ENCODE measurements at regions of chr18 and their contacts with region 1.

Region 1: GRCh38 chr18:74551936-74552555 is 17.7 kb downstream of the CNDP1 start:
- DNase-seq: peak; percentile 83 to 92 (median 86)
- H3K4me3 ChIP-seq: no peak overlapping the region
- H3K27ac ChIP-seq: no peak overlapping the region
- H3K4me1 ChIP-seq: no peaks in the 10 kb centered on the region
- H3K27me3 ChIP-seq: peaks cover 0 to 5% (median 0%) of the 10 kb centered on the region in 5 experiments

Region 2: GRCh38 chr18:74196220-74197119 is 355.6 kb before region 1 on chr18:
- CTCF ChIA-PET with region 1: interaction called, 14 read pairs
- POLR2A ChIA-PET with region 1: no interaction called
- DNase-seq: peak; percentile 70 to 88 (median 85)
- H3K4me3 ChIP-seq: peak overlapping the region in 6 of 7 experiments; percentile 44 to 81 (median 56)
- H3K27ac ChIP-seq: peak overlapping the region in 1 of 2 experiments; percentile 45
- H3K4me1 ChIP-seq: peaks cover 0 to 3% (median 0%) of the 10 kb centered on the region in 4 experiments
- H3K27me3 ChIP-seq: peaks cover 0 to 7% (median 5%) of the 10 kb centered on the region in 5 experiments

Region 3: GRCh38 chr18:74353169-74353775 is 198.8 kb before region 1 on chr18:
- CTCF ChIA-PET with region 1: interaction called, 48 read pairs
- POLR2A ChIA-PET with region 1: no interaction called
- DNase-seq: peak; percentile 72 to 81 (median 74)
- H3K4me3 ChIP-seq: no peak overlapping the region
- H3K27ac ChIP-seq: no peak overlapping the region
- H3K4me1 ChIP-seq: peaks cover 0 to 9% (median 1%) of the 10 kb centered on the region in 4 experiments
- H3K27me3 ChIP-seq: no peaks in the 10 kb centered on the region

Region 4: GRCh38 chr18:74495581-74496507 is 56.2 kb before region 1 on chr18 and contains the start of gene CNDP2:
- CTCF ChIA-PET with region 1: interaction called, 18 read pairs
- POLR2A ChIA-PET with region 1: no interaction called
- DNase-seq: peak; percentile 98 to 99 (median 99)
- H3K4me3 ChIP-seq: peak within 1 kb of the TSS; percentile 81 to 96 (median 82)
- H3K27ac ChIP-seq: peak within 1 kb of the TSS; percentile 74 to 91
- H3K4me1 ChIP-seq: peaks cover 15 to 46% (median 35%) of the 10 kb centered on the region in 4 experiments
- H3K27me3 ChIP-seq: no peaks in the 10 kb centered on the region

Region 5: GRCh38 chr18:74541703-74542555 is 10.1 kb before region 1 on chr18:
- CTCF ChIA-PET with region 1: interaction called, 13 read pairs
- POLR2A ChIA-PET with region 1: no interaction called
- DNase-seq: no peak
- H3K4me3 ChIP-seq: no peak overlapping the region
- H3K27ac ChIP-seq: no peak overlapping the region
- H3K4me1 ChIP-seq: peaks cover 0 to 2% (median 0%) of the 10 kb centered on the region in 4 experiments
- H3K27me3 ChIP-seq: no peaks in the 10 kb centered on the region

Region 6: GRCh38 chr18:74567822-74568221 is 15.8 kb after region 1 on chr18:
- CTCF ChIA-PET with region 1: interaction called, 10 read pairs
- POLR2A ChIA-PET with region 1: no interaction called
- DNase-seq: peak; percentile 52 to 81 (median 78)
- H3K4me3 ChIP-seq: no peak overlapping the region
- H3K27ac ChIP-seq: no peak overlapping the region
- H3K4me1 ChIP-seq: peaks cover 0 to 5% (median 0%) of the 10 kb centered on the region in 4 experiments
- H3K27me3 ChIP-seq: peaks cover 0 to 10% (median 0%) of the 10 kb centered on the region in 5 experiments

Measured in common myeloid progenitor, CD34-positive (primary cell).